Mammary epithelial cell (primary cell): ENCODE measurements at regions of chrX and their contacts with region 1.

Region 1: GRCh38 chrX:71989768-71990426 is 79.3 kb downstream of the NHSL2 start:
- DNase-seq: peak; percentile 69
- H3K4me3 ChIP-seq: no peak overlapping the region
- H3K27ac ChIP-seq: no peak overlapping the region
- H3K4me1 ChIP-seq: peaks cover 8% of the 10 kb centered on the region
- H3K27me3 ChIP-seq: no peaks in the 10 kb centered on the region
- CTCF ChIP-seq: no peak

Region 2: GRCh38 chrX:70852303-70852702 is 1137.6 kb before region 1 on chrX:
- CTCF ChIA-PET with region 1: no interaction called
- dilution Hi-C with region 1: no loop called
- in situ Hi-C with region 1: no loop called
- intact Hi-C with region 1: no loop called
- DNase-seq: peak; percentile 3
- H3K4me3 ChIP-seq: no peak overlapping the region
- H3K27ac ChIP-seq: no peak overlapping the region
- H3K4me1 ChIP-seq: no peaks in the 10 kb centered on the region
- H3K27me3 ChIP-seq: no peaks in the 10 kb centered on the region
- CTCF ChIP-seq: no peak

Region 3: DNA sequence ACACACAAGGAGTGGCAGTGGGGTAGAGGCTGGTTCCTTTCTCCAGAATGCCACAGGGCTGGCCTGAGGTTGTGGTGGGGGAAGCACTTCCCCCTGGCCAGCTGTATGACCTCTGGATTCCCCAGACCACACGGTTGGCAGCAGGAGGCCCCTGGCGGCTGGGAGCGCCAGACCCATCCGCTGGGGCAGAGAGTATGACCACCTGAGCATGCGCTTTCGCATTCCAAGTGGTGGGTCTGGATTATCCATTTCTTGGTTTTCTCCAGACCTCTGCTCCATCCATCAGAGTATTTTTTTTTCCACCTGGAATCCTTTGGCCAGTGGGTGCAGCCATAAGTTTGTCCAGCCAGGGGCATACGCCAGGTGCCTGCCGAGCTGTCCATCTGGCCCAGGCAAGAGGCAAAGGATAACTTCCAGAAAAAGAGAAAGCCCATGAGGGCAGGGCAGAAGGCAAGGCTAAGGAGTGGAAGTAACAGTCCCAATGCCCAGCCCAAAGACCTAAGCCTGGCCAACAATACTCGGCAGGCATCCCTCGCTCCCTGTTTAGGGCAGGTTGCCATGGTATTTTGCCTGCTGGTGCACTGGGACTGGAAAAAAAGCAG is 40.0 kb before region 1 on chrX:
- CTCF ChIA-PET with region 1: no interaction called
- dilution Hi-C with region 1: loop called (anchors 5 kb)
- in situ Hi-C with region 1: no loop called
- intact Hi-C with region 1: no loop called
- DNase-seq: no peak
- H3K4me3 ChIP-seq: no peak overlapping the region
- H3K27ac ChIP-seq: no peak overlapping the region
- H3K4me1 ChIP-seq: no peaks in the 10 kb centered on the region
- H3K27me3 ChIP-seq: peaks cover 6% of the 10 kb centered on the region
- CTCF ChIP-seq: no peak

Region 4: DNA sequence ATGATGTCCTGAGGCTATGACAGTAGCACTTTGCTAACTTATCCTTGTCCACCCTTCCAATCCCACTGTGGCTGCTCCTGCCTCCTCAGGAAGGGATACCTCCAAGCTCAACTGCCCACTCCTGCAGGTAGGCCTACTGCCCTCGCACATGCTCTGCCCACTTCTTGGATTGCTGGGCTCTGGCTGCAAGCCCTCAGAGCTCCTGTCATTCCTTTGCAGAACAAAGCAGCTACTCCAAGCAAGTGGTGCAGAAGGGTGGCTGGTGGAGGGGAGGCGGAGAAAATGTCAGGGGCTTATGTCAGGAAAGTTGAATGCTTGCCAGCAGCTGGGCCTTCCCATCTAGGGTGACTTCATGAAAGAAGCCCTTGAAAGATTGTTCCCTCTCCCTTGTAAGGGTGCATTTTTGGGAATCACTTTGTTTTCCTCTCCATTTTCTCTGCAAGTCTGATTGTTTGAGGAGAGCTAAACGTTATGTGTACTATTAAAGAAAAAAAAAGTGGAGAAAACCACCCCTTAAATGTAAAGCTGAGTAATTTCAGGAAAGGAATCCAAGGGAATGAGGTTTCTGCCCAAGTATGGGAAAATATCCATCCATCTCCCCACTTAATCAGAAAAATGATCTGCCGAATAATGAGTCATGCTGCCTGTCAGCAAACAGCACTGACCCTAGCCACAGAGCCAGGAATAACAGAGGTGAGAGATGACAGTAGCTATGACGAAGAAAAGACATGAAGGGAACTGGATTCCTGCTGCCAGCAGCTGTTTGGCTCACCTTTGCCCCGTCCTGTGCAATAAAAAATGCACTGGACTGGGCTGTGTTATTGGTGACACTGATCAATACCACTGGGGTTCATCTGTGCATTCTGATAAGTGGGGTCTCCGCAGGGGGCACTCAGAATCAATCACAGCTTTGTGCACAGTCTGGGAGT is 39.9 kb after region 1 on chrX:
- CTCF ChIA-PET with region 1: no interaction called
- dilution Hi-C with region 1: loop called (anchors 5 kb)
- in situ Hi-C with region 1: no loop called
- intact Hi-C with region 1: no loop called
- DNase-seq: peak; percentile 77
- H3K4me3 ChIP-seq: no peak overlapping the region
- H3K27ac ChIP-seq: no peak overlapping the region
- H3K4me1 ChIP-seq: peaks cover 20% of the 10 kb centered on the region
- H3K27me3 ChIP-seq: no peaks in the 10 kb centered on the region
- CTCF ChIP-seq: no peak